Caco-2 (cell line): ENCODE measurements at regions of chr5 and their contacts with region 1.

Region 1: GRCh38 chr5:134586866-134587524 is 45.6 kb downstream of the SAR1B start:
- DNase-seq: peak; percentile 85 to 86
- H3K4me3 ChIP-seq: no peak overlapping the region
- H3K4me3 Mint-ChIP-seq: no peak overlapping the region
- H3K27ac Mint-ChIP-seq: no peak overlapping the region
- H3K4me1 ChIP-seq: peaks cover 11% of the 10 kb centered on the region
- H3K4me1 Mint-ChIP-seq: peaks cover 5% of the 10 kb centered on the region
- H3K27me3 ChIP-seq: no peaks in the 10 kb centered on the region
- H3K27me3 Mint-ChIP-seq: no peaks in the 10 kb centered on the region
- CTCF ChIP-seq: peak; percentile 59 to 85

Region 2: DNA sequence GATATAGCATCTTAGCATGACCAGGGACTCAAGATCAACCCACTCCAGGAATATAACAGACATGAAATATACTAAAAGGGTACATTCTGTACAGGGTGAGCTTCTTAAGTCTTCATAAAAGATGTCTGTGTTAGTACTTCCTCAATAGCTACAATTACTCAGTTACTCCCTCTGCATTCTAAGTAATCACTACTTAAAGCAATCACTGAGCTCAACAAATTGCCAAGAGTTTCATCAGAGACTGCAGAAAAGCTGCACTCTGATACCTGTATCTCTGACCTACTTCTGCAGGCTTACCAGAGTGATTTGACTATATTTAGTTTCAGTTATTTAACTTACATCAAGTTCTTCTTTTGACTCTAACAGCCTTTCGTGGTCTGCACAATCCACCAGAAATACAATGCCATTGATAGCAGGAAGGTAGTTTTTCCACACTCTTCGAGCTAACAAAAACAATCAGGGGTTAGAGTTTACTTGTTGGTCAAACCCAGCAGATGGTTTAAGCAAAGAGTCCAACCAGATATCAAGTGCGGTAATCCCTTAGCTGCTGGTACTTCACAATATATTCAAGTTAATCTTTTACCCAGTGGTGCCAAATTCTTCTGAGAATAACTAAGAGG is 22.3 kb after region 1 on chr5:
- CTCF ChIA-PET with region 1: interaction called, 13 read pairs
- POLR2A ChIA-PET with region 1: interaction called, 3 read pairs
- intact Hi-C with region 1: no loop called
- DNase-seq: peak in 1 of 2 experiments; percentile 50
- H3K4me3 ChIP-seq: no peak overlapping the region
- H3K4me3 Mint-ChIP-seq: no peak overlapping the region
- H3K27ac Mint-ChIP-seq: peak overlapping the region; percentile 78
- H3K4me1 ChIP-seq: peaks cover 13% of the 10 kb centered on the region
- H3K4me1 Mint-ChIP-seq: peaks cover 16% of the 10 kb centered on the region
- H3K27me3 ChIP-seq: no peaks in the 10 kb centered on the region
- H3K27me3 Mint-ChIP-seq: no peaks in the 10 kb centered on the region
- CTCF ChIP-seq: no peak